ENCODE measurements at regions of chr7 and their contacts with region 1.

Region 1: GRCh38 chr7:17646253-17646956 is 293.9 kb downstream of the SNX13 start:
- DNase-seq: peak; percentile 43
- H3K4me3 Mint-ChIP-seq: no peak overlapping the region
- H3K27ac Mint-ChIP-seq: no peak overlapping the region
- H3K4me1 Mint-ChIP-seq: peaks cover 19% of the 10 kb centered on the region
- H3K27me3 Mint-ChIP-seq: no peaks in the 10 kb centered on the region
- CTCF ChIP-seq: peak; percentile 51

Region 2: GRCh38 chr7:16926283-16926682 is 720.1 kb before region 1 on chr7:
- CTCF ChIA-PET with region 1: interaction called, 3 read pairs
- POLR2A ChIA-PET with region 1: no interaction called
- intact Hi-C with region 1: loop called (anchors 1 kb)
- DNase-seq: peak; percentile 63
- H3K4me3 Mint-ChIP-seq: no peak overlapping the region
- H3K27ac Mint-ChIP-seq: no peak overlapping the region
- H3K4me1 Mint-ChIP-seq: peaks cover 24% of the 10 kb centered on the region
- H3K27me3 Mint-ChIP-seq: no peaks in the 10 kb centered on the region
- CTCF ChIP-seq: peak; percentile 71

Region 3: GRCh38 chr7:17304926-17305325 is 341.5 kb before region 1 on chr7:
- CTCF ChIA-PET with region 1: interaction called, 23 read pairs
- POLR2A ChIA-PET with region 1: interaction called, 13 read pairs
- intact Hi-C with region 1: loop called (anchors 1 kb)
- DNase-seq: peak; percentile 94
- H3K4me3 Mint-ChIP-seq: peak overlapping the region; percentile 70
- H3K27ac Mint-ChIP-seq: peak overlapping the region; percentile 85
- H3K4me1 Mint-ChIP-seq: peaks cover 23% of the 10 kb centered on the region
- H3K27me3 Mint-ChIP-seq: no peaks in the 10 kb centered on the region
- CTCF ChIP-seq: no peak

Region 4: GRCh38 chr7:17523813-17524741 is 122.3 kb before region 1 on chr7:
- CTCF ChIA-PET with region 1: interaction called, 3 read pairs
- POLR2A ChIA-PET with region 1: interaction called, 9 read pairs
- intact Hi-C with region 1: loop called (anchors 5 kb)
- DNase-seq: peak; percentile 96
- H3K4me3 Mint-ChIP-seq: peak overlapping the region; percentile 19
- H3K27ac Mint-ChIP-seq: peak overlapping the region; percentile 83
- H3K4me1 Mint-ChIP-seq: peaks cover 50% of the 10 kb centered on the region
- H3K27me3 Mint-ChIP-seq: no peaks in the 10 kb centered on the region
- CTCF ChIP-seq: no peak

Region 5: DNA sequence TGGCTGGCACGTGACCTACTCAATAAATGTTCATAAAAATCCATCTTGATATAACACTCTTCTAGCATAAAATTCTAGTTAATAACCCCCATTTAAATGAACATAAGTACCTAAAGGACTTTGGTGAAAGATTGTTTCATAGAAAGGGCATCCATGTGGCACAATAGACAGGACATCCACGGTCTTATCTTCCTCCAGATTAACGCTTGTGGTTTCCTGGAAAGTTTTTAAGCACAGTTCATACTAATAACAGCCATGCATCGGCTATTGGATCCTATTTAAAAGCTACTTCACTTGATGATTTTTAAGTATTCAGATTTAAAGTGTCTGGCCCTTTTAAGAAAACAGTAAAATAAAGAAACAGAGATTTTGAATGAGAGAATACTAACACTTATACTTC is 59.7 kb before region 1 on chr7:
- CTCF ChIA-PET with region 1: no interaction called
- POLR2A ChIA-PET with region 1: no interaction called
- intact Hi-C with region 1: no loop called
- DNase-seq: no peak
- H3K4me3 Mint-ChIP-seq: no peak overlapping the region
- H3K27ac Mint-ChIP-seq: no peak overlapping the region
- H3K4me1 Mint-ChIP-seq: peaks cover 7% of the 10 kb centered on the region
- H3K27me3 Mint-ChIP-seq: no peaks in the 10 kb centered on the region
- CTCF ChIP-seq: no peak

Region 6: GRCh38 chr7:17599733-17600685 is 46.4 kb before region 1 on chr7:
- CTCF ChIA-PET with region 1: interaction called, 6 read pairs
- POLR2A ChIA-PET with region 1: interaction called, 10 read pairs
- intact Hi-C with region 1: loop called (anchors 2 kb)
- DNase-seq: peak; percentile 96
- H3K4me3 Mint-ChIP-seq: peak overlapping the region; percentile 56
- H3K27ac Mint-ChIP-seq: peak overlapping the region; percentile 91
- H3K4me1 Mint-ChIP-seq: peaks cover 29% of the 10 kb centered on the region
- H3K27me3 Mint-ChIP-seq: no peaks in the 10 kb centered on the region
- CTCF ChIP-seq: no peak